Activated T-helper 1 cell treated with anti-CD3 and anti-CD28 coated beads, Interleukin-12 subunit alpha, Interleukin-12 subunit beta, Interleukin-2, Interleukin-4 antibody, amounts not matched to agents 30 ng/mL and 10 ng/mL and 1 ng/mL, durations not matched to agents 14 hours and 24 hours and 36 hours (primary cell): ENCODE measurements at regions of chr16 and their contacts with region 1.

Region 1: DNA sequence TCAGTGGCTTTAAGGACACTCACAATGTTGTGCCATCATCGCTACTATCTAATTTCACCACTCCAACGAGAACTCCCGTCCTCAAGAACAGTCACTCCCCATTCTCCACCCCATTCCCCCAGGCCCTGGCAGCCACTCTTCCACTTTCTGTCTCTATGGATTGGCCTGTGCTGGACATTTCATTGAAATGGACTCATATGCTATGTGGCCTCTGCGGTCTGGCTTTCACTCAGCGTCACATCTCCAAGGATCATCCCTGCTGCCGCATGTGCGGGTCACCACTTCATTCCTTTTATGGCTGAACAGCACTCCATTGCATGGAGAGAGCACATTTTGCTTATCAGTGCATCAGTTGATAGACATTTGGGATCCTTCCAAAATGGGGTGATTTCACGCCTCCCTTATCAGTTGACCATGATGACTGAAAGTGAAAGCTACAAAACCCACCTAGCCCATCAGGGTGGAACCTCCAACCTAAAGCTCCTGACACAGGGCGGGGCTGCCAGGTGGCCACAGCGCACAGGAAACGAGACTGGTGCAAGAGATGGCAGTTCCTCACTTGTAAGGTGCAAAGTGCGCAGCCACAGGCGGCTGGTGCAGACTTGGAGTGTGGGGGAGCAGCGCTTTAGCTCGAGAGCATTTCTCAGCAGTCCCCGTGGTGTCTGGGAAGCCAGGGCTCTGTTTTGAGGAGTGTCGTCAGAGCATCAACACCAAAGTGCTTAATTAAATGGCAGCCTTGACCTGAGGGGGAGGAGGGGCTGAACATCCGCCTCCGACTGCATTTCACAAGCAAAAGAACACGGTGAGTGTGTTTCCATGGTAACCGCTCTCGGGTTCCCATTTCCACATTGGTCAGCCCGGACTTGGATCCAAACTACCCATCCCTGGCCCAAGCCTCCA is 23.8 kb downstream of the COTL1 start:
- DNase-seq: peak; percentile 75
- H3K4me3 Mint-ChIP-seq: peak overlapping the region; percentile 80
- H3K27ac Mint-ChIP-seq: peak overlapping the region; percentile 97
- H3K4me1 Mint-ChIP-seq: peaks cover 62% of the 10 kb centered on the region
- H3K27me3 Mint-ChIP-seq: no peaks in the 10 kb centered on the region

Region 2: GRCh38 chr16:84562174-84562815 is 31.8 kb before region 1 on chr16:
- intact Hi-C with region 1: no loop called
- DNase-seq: no peak
- H3K4me3 Mint-ChIP-seq: no peak overlapping the region
- H3K27ac Mint-ChIP-seq: no peak overlapping the region
- H3K4me1 Mint-ChIP-seq: peaks cover 11% of the 10 kb centered on the region
- H3K27me3 Mint-ChIP-seq: no peaks in the 10 kb centered on the region

Region 3: GRCh38 chr16:84579936-84580335 is 14.1 kb before region 1 on chr16:
- intact Hi-C with region 1: loop called (anchors 2 kb)
- DNase-seq: no peak
- H3K4me3 Mint-ChIP-seq: no peak overlapping the region
- H3K27ac Mint-ChIP-seq: no peak overlapping the region
- H3K4me1 Mint-ChIP-seq: peaks cover 53% of the 10 kb centered on the region
- H3K27me3 Mint-ChIP-seq: no peaks in the 10 kb centered on the region

Region 4: GRCh38 chr16:84607694-84608093 is 13.6 kb after region 1 on chr16:
- intact Hi-C with region 1: loop called (anchors 2 kb)
- DNase-seq: no peak
- H3K4me3 Mint-ChIP-seq: peak overlapping the region; percentile 75
- H3K27ac Mint-ChIP-seq: peak overlapping the region; percentile 80
- H3K4me1 Mint-ChIP-seq: peaks cover 90% of the 10 kb centered on the region
- H3K27me3 Mint-ChIP-seq: no peaks in the 10 kb centered on the region